Right ventricle myocardium inferior (tissue), 1 donor: ENCODE measurements at regions of chr17 and their contacts with region 1.

Region 1: DNA sequence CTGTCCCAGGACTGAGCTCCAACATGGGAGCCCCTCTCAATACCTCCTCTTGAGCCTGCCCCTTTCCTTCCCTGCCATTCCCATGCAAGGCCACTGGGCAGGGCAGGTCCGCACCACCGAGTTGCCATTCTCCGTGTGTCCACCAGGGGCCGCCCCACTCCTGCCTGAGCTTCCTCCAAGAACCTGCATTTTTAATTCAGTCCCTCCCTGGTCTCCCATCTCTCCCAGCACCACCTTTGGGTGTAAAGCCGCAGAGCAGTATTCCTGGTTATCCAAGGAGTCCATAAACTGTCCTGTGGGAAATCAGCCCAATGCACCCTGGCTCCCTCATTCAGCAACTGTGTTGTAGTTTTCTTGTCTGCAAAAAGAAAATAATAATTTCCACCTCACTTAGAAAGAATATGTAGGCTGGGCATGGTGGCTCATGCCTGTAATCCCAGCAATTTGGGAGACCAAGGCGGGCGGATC is 15.9 kb upstream of the ANKRD40CL start:
- DNase-seq: peak; percentile 92
- ATAC-seq: peak; percentile 86

Region 2: GRCh38 chr17:50841949-50842354 is 58.7 kb after region 1 on chr17:
- intact Hi-C with region 1: loop called (anchors 1 kb)
- DNase-seq: no peak
- ATAC-seq: peak; percentile 58

Region 3: DNA sequence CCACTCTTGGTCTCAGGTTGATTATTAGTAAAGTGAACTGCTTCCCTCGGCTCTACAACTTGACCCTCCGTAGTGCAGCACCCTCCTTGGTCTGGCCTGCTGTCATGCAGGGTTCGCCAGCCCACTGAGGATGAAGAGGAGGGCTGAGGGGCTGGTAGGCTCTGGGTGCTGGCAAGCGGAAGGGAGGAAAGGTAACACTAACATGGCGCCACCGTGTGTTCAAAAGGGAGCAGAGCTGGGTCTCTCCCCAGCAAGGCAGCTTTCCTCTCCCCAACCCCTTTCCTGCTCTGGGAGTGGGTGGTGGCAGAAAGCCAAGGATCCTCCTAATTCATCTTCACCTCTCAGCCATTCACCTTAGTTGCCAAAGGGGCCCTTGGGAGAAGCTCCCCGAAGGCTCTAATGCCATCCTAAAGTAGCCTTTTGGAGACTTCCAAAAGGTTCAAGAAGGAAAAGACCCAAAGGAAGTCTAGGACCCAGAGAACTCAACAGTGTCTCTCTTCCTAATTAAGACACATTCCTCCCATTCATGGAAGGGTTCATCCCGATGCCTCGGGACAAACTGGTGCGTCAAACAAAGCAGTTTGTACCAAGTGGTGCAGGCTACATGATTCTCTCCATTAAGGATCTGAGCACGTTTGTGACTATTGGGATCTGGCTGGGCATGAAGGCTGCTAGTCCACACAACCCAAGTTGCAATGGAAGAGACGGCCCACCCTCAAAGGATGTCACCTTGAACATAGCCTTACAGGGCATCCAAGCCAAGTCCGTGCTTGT is 173.7 kb after region 1 on chr17:
- intact Hi-C with region 1: loop called (anchors 2 kb)
- DNase-seq: peak; percentile 76
- ATAC-seq: peak; percentile 64